PC-3 (cell line): ENCODE measurements at regions of chr2 and their contacts with region 1.

Region 1: DNA sequence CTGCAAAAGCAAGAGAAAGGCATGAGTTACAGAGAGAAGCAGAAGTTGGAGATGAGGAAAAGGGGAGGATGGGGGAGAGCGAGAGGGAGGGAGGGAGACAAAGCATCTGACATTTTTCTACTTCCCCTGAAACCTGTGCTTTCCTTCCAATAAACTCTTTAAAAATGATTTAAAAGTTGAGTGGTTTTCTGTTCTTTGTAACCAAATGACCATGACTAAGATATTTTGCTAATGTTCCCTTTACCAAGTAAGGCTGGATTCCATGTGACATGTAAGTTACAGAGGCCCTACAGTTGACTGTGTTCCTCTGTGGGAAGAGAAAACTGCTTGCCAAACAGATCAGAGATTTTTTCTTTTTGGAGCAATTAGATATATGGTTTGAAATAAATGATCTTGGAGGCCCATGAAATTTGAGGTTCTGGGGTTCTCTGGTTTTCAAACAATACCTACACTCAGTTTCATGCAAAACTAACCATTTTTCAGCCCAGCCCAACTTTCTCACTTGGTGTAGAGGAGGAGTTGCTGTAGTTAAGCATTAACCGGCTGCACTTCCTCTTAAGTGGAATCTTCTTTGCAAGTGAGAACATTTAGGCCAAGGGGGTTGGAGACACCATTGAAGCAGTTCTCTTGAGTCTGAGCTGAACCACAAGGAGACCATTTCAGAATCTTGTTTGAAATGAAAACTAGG is 34.5 kb downstream of the INSIG2 start:
- DNase-seq: peak; percentile 59
- ATAC-seq: peak; percentile 17; the same call in 1 of the 2 replicates
- H3K4me3 ChIP-seq: peak overlapping the region; percentile 25; the same call in 1 of the 2 replicates
- H3K27ac ChIP-seq: peak overlapping the region; percentile 99
- H3K4me1 ChIP-seq: peaks cover 57% of the 10 kb centered on the region
- H3K27me3 ChIP-seq: no peaks in the 10 kb centered on the region
- CTCF ChIP-seq: no peak

Region 2: GRCh38 chr2:116874021-116874420 is 1248.7 kb before region 1 on chr2:
- CTCF ChIA-PET with region 1: no interaction called
- POLR2A ChIA-PET with region 1: no interaction called
- intact Hi-C with region 1: no loop called
- DNase-seq: no peak
- ATAC-seq: no peak
- H3K4me3 ChIP-seq: no peak overlapping the region
- H3K27ac ChIP-seq: no peak overlapping the region
- H3K4me1 ChIP-seq: no peaks in the 10 kb centered on the region
- H3K27me3 ChIP-seq: peaks cover 6% of the 10 kb centered on the region
- CTCF ChIP-seq: no peak

Region 3: DNA sequence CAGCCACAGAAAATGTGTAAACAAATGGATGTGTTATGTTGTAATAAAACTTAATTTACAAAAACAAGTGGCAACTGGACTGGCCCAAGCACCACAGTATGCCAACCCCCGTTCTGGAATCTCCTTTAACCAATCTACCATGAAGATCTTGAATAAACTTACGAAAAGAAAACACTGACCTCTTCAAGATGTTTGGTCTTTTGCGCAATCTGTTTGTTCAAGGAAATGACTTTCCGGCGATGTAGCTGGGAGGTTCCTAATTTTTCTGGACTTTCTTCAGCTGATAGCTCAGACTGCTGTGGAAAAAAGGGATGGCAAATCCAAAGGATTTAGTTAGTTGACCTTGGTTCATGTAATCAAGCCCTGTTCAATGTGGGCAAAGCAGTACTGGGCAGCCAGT is 164.6 kb before region 1 on chr2:
- CTCF ChIA-PET with region 1: no interaction called
- POLR2A ChIA-PET with region 1: no interaction called
- intact Hi-C with region 1: no loop called
- DNase-seq: peak; percentile 93
- ATAC-seq: peak; percentile 82
- H3K4me3 ChIP-seq: no peak overlapping the region; the same call in 1 of the 2 replicates
- H3K27ac ChIP-seq: peak overlapping the region; percentile 83
- H3K4me1 ChIP-seq: peaks cover 26% of the 10 kb centered on the region
- H3K27me3 ChIP-seq: no peaks in the 10 kb centered on the region
- CTCF ChIP-seq: no peak

Region 4: DNA sequence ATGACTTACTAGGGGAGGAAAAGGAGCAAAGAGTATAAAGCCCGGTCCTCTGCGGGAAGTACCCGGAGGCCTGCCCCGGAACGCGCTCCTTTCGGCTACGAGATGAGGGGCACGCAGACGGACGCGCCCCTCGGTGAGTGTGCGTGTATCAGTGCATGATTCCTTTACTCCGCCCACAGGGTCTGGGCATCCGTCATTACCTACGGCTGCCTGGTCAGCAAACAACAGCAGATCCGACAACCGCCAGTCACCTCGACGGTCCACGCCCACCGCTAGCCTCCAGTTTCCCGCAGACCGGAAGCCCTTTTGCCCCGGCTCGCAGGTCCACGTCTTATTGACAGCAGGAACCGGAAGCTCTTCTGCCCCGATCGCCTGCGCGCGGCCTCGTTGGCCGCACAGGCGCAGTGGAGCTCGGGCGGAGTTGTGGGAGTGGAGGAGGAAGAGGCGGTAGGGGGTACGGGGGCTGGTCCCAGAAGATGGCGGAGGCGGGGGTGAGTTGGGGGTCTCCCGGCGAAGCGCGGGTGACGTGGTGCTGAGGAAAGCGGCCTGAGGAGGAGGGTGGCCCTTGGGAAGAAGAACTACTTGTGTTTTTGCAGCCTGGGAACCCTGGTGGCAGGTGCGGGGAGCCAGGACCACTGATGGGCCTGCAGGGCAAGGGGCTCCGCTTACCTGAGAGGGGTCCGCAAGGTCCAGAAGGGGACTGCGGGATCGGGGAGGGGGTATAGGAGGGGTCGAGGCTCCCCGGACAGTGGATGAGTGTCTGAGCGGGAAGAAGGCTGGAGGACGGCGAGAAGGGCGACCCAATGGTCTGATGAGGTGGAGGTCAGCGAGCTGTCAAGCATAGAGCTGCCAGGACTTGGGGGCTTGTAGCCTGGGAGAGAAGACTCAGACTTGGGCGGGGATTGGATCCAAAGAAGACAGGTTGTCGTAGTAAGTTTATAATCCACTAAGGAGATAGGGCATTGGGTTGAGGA is 34.4 kb before region 1 on chr2 and contains the start of gene INSIG2:
- CTCF ChIA-PET with region 1: no interaction called
- POLR2A ChIA-PET with region 1: interaction called, 9 read pairs
- intact Hi-C with region 1: loop called (anchors 5 kb)
- DNase-seq: peak; percentile 98
- ATAC-seq: peak; percentile 88
- H3K4me3 ChIP-seq: peak within 1 kb of the TSS; percentile 88
- H3K27ac ChIP-seq: peak within 1 kb of the TSS; percentile 57
- H3K4me1 ChIP-seq: peaks cover 43% of the 10 kb centered on the region
- H3K27me3 ChIP-seq: no peaks in the 10 kb centered on the region
- CTCF ChIP-seq: no peak
- total RNA-seq, gene INSIG2: 7.4 and 8.5 TPM in 2 replicates